Panc1 (cell line): ENCODE measurements at regions of chr9 and their contacts with region 1.

Region 1: GRCh38 chr9:114291064-114291474 is 31.8 kb upstream of the ORM1 start:
- DNase-seq: no peak
- ATAC-seq: peak; percentile 62
- H3K4me3 ChIP-seq: no peak overlapping the region
- H3K27ac ChIP-seq: no peak overlapping the region
- H3K4me1 ChIP-seq: peaks cover 15% of the 10 kb centered on the region
- H3K27me3 ChIP-seq: no peaks in the 10 kb centered on the region
- CTCF ChIP-seq: peak; percentile 85

Region 2: DNA sequence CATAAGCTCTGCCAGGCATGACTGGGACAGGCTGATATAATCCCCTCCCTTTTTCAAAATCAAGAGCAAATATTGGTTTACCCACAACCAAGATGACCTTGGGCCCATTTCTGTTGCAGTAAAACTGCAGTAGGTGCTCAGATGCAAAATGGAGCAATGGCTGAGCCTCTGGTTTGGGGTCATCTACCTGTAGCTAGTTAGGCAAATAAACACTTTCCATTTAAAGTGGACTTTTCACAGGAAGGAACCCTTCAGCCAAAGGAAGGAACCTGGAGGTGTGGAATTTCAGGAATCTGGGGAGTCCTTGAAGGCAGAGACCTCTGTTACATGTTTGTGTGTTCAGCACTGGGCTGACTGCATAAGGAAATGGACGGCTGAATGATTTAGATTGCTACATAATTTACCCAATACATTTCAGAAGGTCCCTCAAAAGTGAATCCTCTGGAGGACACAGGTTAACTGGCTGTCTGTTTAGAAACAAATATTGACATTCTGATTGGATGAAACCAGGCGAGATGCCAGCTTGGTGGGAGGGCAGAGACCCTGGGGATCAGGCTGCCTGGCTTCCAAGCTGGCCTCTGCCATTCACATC is 585.0 kb before region 1 on chr9:
- CTCF ChIA-PET with region 1: no interaction called
- POLR2A ChIA-PET with region 1: no interaction called
- in situ Hi-C with region 1: no loop called
- intact Hi-C with region 1: no loop called
- DNase-seq: no peak
- ATAC-seq: no peak
- H3K4me3 ChIP-seq: no peak overlapping the region
- H3K27ac ChIP-seq: no peak overlapping the region
- H3K4me1 ChIP-seq: no peaks in the 10 kb centered on the region
- H3K27me3 ChIP-seq: no peaks in the 10 kb centered on the region
- CTCF ChIP-seq: no peak

Region 3: GRCh38 chr9:114155263-114155972 is 135.7 kb before region 1 on chr9 and contains the start of gene COL27A1:
- CTCF ChIA-PET with region 1: interaction called, 6 read pairs
- POLR2A ChIA-PET with region 1: no interaction called
- in situ Hi-C with region 1: no loop called
- intact Hi-C with region 1: loop called (anchors 2 kb)
- DNase-seq: no peak
- ATAC-seq: peak; percentile 90
- H3K4me3 ChIP-seq: peak within 1 kb of the TSS; percentile 52 to 56
- H3K27ac ChIP-seq: peak within 1 kb of the TSS; percentile 58
- H3K4me1 ChIP-seq: peaks cover 4% of the 10 kb centered on the region
- H3K27me3 ChIP-seq: peaks cover 2% of the 10 kb centered on the region; the same call in 1 of the 2 replicates
- CTCF ChIP-seq: peak; percentile 91
- total RNA-seq, gene COL27A1: 5.1 TPM

Region 4: GRCh38 chr9:114348906-114349482 is 57.9 kb after region 1 on chr9:
- CTCF ChIA-PET with region 1: no interaction called
- POLR2A ChIA-PET with region 1: no interaction called
- in situ Hi-C with region 1: no loop called
- intact Hi-C with region 1: no loop called
- DNase-seq: peak; percentile 18
- ATAC-seq: no peak; the same call in 1 of the 2 replicates
- H3K4me3 ChIP-seq: no peak overlapping the region
- H3K27ac ChIP-seq: no peak overlapping the region
- H3K4me1 ChIP-seq: no peaks in the 10 kb centered on the region
- H3K27me3 ChIP-seq: no peaks in the 10 kb centered on the region
- CTCF ChIP-seq: no peak